Calu3 (cell line): ENCODE measurements at regions of chr1 and their contacts with region 1.

Region 1: DNA sequence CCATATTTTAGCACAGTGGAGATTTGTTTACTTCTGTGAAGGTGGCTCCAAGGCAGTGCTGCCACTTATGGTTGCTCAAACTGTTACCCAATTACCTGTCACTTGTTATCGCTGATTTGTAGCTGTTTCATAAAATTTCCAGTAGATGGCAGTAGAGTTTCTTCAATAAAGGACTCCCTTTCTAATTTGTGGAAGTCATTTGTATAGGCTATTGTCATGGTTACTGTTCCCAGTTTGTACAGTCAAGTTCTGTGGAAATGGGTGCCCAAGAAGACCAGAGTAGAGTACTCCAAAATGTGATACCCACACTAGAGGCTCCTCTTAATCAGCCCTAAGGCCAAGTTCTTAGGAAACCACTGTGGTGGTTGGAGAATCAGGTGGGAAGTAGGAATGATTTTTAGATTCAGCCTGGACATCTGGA is 186.1 kb downstream of the CLEC20A start:
- DNase-seq: peak; percentile 28
- H3K4me3 Mint-ChIP-seq: no peak overlapping the region
- H3K27ac Mint-ChIP-seq: peak overlapping the region; percentile 0
- H3K4me1 Mint-ChIP-seq: peaks cover 38% of the 10 kb centered on the region
- H3K27me3 Mint-ChIP-seq: no peaks in the 10 kb centered on the region
- CTCF ChIP-seq: peak; percentile 61

Region 2: GRCh38 chr1:178004926-178005391 is 305.7 kb before region 1 on chr1:
- CTCF ChIA-PET with region 1: no interaction called
- intact Hi-C with region 1: no loop called
- DNase-seq: no peak
- H3K4me3 Mint-ChIP-seq: no peak overlapping the region
- H3K27ac Mint-ChIP-seq: no peak overlapping the region
- H3K4me1 Mint-ChIP-seq: no peaks in the 10 kb centered on the region
- H3K27me3 Mint-ChIP-seq: no peaks in the 10 kb centered on the region
- CTCF ChIP-seq: no peak

Region 3: GRCh38 chr1:178344513-178345082 is 33.9 kb after region 1 on chr1:
- CTCF ChIA-PET with region 1: interaction called, 8 read pairs
- intact Hi-C with region 1: loop called (anchors 2 kb)
- DNase-seq: peak; percentile 41
- H3K4me3 Mint-ChIP-seq: no peak overlapping the region
- H3K27ac Mint-ChIP-seq: peak overlapping the region; percentile 84
- H3K4me1 Mint-ChIP-seq: peaks cover 46% of the 10 kb centered on the region
- H3K27me3 Mint-ChIP-seq: no peaks in the 10 kb centered on the region
- CTCF ChIP-seq: peak; percentile 69

Region 4: DNA sequence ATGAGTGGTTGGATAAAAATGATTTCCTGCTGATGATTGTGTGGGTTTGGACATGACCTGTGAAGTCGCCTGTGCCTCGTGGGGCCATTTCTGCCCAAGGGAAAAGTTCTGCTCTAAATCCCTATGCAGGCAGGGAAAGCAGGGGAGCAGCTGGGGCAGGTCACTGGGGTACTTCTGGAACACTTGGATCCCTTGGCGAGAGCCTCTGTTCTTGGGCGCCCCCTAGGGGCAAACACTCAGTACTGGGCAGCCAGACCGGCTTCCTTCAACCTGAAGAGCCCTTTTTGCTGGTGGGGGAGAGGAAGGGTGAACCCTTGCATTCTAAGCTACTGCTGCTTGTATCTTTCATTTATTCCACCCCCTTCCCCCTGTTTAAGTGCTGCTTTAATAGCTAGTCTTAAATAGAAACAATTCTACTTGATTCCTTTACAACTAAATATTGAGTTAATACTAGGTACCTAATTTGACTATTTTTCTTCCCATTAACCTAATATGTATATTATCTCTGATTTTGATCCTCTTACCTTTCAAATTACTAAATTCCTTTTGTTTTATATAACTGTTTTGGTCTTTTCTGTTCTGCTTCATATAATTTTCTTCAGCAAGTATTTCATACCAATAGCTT is 191.1 kb after region 1 on chr1:
- CTCF ChIA-PET with region 1: interaction called, 11 read pairs
- intact Hi-C with region 1: loop called (anchors 2 kb)
- DNase-seq: peak; percentile 92
- H3K4me3 Mint-ChIP-seq: no peak overlapping the region
- H3K27ac Mint-ChIP-seq: no peak overlapping the region
- H3K4me1 Mint-ChIP-seq: peaks cover 8% of the 10 kb centered on the region
- H3K27me3 Mint-ChIP-seq: peaks cover 11% of the 10 kb centered on the region
- CTCF ChIP-seq: peak; percentile 96

Region 5: GRCh38 chr1:178532392-178532791 is 221.7 kb after region 1 on chr1:
- CTCF ChIA-PET with region 1: interaction called, 7 read pairs
- intact Hi-C with region 1: loop called (anchors 2 kb)
- DNase-seq: peak; percentile 91
- H3K4me3 Mint-ChIP-seq: no peak overlapping the region
- H3K27ac Mint-ChIP-seq: no peak overlapping the region
- H3K4me1 Mint-ChIP-seq: peaks cover 47% of the 10 kb centered on the region
- H3K27me3 Mint-ChIP-seq: no peaks in the 10 kb centered on the region
- CTCF ChIP-seq: peak; percentile 97